ENCODE measurements at regions of chr15 and their contacts with region 1.

Region 1: GRCh38 chr15:66287461-66288057 is 5.8 kb upstream of the DIS3L start:
- DNase-seq: no peak
- ATAC-seq: no peak
- H3K4me3 Mint-ChIP-seq: no peak overlapping the region
- H3K27ac Mint-ChIP-seq: no peak overlapping the region
- H3K4me1 Mint-ChIP-seq: peaks cover 18% of the 10 kb centered on the region
- H3K27me3 Mint-ChIP-seq: no peaks in the 10 kb centered on the region
- CTCF ChIP-seq: peak; percentile 79

Region 2: GRCh38 chr15:65400760-65401610 is 886.6 kb before region 1 on chr15:
- CTCF ChIA-PET with region 1: no interaction called
- POLR2A ChIA-PET with region 1: no interaction called
- intact Hi-C with region 1: loop called (anchors 2 kb)
- DNase-seq: no peak
- ATAC-seq: peak; percentile 66
- H3K4me3 Mint-ChIP-seq: no peak overlapping the region
- H3K27ac Mint-ChIP-seq: no peak overlapping the region
- H3K4me1 Mint-ChIP-seq: peaks cover 8% of the 10 kb centered on the region
- H3K27me3 Mint-ChIP-seq: peaks cover 59% of the 10 kb centered on the region
- CTCF ChIP-seq: no peak